Activated CD4-positive, alpha-beta T cell treated with anti-CD3 and anti-CD28 coated beads, Interleukin-2, amount 10 ng/mL, durations not matched to agents 24 days and 14 days (primary cell): ENCODE measurements at regions of chr2 and their contacts with region 1.

Region 1: GRCh38 chr2:95207111-95207961 is at the start of gene ZNF892:
- DNase-seq: peak; percentile 94
- H3K4me3 Mint-ChIP-seq: peak within 1 kb of the TSS; percentile 92
- H3K27ac Mint-ChIP-seq: peak within 1 kb of the TSS; percentile 82
- H3K4me1 Mint-ChIP-seq: peaks cover 11% of the 10 kb centered on the region
- H3K27me3 Mint-ChIP-seq: no peaks in the 10 kb centered on the region
- total RNA-seq, gene ZNF892: 4.7 and 5.5 TPM in 2 replicates

Region 2: GRCh38 chr2:95034221-95034620 is 173.1 kb before region 1 on chr2:
- intact Hi-C with region 1: no loop called
- DNase-seq: no peak
- H3K4me3 Mint-ChIP-seq: no peak overlapping the region
- H3K27ac Mint-ChIP-seq: no peak overlapping the region
- H3K4me1 Mint-ChIP-seq: peaks cover 60% of the 10 kb centered on the region
- H3K27me3 Mint-ChIP-seq: no peaks in the 10 kb centered on the region

Region 3: DNA sequence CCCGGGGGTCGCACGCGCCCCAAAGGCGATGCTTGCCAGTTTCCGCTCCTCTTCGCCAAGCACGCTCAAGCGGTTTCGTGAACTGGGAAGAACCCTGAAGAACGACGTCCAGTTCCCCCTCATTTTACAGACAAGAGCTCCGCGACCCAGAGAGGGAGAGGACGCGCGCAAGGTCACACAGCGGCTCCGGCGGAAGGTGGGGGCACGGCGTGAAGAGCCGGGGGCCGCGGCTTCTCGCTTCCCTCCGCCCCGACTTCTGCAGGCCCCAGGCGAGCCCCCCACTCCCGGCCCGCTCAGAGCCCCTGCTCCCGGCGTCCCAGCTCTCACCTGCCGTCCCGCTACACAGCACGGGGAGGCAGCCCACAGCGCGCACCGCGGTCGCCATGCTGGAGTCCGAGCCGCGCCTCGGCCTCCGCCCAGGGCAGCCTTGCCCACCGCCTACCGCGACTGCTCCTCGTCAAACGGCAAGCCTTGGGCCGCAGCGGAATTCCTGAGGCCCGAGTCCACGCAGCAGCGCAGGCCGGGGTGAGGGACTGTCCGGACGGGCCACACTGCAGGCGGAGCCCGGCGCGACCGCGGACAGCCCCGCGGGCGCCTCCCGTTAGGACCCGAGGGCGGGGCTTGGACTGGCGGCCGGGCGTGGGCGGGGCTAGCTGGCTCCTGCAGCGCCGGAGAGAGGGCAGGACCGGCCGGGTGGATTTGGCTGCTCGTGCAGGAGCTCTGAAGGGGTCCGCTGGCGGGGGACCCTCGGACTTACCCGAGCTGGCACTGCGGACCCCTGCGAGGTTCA is 85.7 kb before region 1 on chr2 and contains the start of gene MRPS5:
- intact Hi-C with region 1: loop called (anchors 2 kb)
- DNase-seq: peak; percentile 97
- H3K4me3 Mint-ChIP-seq: peak within 1 kb of the TSS; percentile 98
- H3K27ac Mint-ChIP-seq: peak within 1 kb of the TSS; percentile 96
- H3K4me1 Mint-ChIP-seq: peaks cover 40% of the 10 kb centered on the region
- H3K27me3 Mint-ChIP-seq: no peaks in the 10 kb centered on the region
- total RNA-seq, gene MRPS5: 97.4 and 103 TPM in 2 replicates

Region 4: GRCh38 chr2:95165129-95166064 is 41.9 kb before region 1 on chr2 and contains the start of gene ZNF2:
- intact Hi-C with region 1: loop called (anchors 1 kb)
- DNase-seq: peak; percentile 99
- H3K4me3 Mint-ChIP-seq: peak within 1 kb of the TSS; percentile 98
- H3K27ac Mint-ChIP-seq: peak within 1 kb of the TSS; percentile 97
- H3K4me1 Mint-ChIP-seq: peaks cover 26% of the 10 kb centered on the region
- H3K27me3 Mint-ChIP-seq: no peaks in the 10 kb centered on the region
- total RNA-seq, gene ZNF2: 4.4 and 5.4 TPM in 2 replicates

Region 5: DNA sequence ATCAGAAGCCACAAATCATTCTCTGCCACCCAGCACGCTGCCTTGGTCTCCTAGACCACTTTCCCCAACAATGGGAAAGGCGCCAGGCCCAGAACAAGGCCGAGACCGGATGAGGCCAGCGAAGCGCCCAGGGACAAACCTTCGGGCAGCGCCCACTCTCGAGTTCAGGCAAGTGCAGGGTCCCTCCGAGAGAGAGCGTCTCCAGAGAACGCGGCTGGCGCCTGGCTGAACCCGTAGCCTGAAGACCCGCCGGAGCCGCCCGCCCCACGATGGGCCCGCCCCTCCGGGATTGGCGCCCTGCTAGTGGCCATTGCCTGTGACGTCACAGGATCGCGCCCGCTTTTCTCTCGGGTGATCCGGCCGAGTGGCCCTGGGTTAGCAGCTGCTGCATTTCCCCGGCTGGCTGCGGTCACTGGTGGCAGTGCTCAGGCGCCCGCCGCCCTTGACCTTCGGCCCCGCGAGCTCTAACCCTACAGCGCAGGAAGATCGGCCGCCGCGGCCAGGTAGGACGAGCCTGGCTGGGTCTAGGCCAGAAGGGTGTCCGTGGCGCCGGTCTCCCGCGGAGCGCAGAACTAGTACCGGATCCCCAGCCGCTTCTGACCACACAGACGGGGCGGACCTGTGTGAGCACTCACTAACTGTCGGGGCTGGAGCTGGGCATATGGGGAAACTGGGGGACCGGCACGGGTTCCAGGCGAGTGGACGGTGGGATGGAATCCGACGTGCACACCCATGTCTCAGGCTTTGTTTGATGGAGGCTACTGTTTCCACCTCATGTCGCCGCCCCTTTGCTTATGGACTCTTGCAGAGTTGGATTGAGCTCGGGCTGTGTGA is 195.3 kb after region 1 on chr2 and contains the start of gene FAHD2A:
- intact Hi-C with region 1: loop called (anchors 5 kb)
- DNase-seq: peak; percentile 99
- H3K4me3 Mint-ChIP-seq: peak within 1 kb of the TSS; percentile 96
- H3K27ac Mint-ChIP-seq: peak within 1 kb of the TSS; percentile 97
- H3K4me1 Mint-ChIP-seq: peaks cover 20% of the 10 kb centered on the region
- H3K27me3 Mint-ChIP-seq: no peaks in the 10 kb centered on the region
- total RNA-seq, gene FAHD2A: 35.8 and 36.0 TPM in 2 replicates